Heart left ventricle (tissue), 16 donors: ENCODE measurements at regions of chr2 and their contacts with region 1.

Region 1: DNA sequence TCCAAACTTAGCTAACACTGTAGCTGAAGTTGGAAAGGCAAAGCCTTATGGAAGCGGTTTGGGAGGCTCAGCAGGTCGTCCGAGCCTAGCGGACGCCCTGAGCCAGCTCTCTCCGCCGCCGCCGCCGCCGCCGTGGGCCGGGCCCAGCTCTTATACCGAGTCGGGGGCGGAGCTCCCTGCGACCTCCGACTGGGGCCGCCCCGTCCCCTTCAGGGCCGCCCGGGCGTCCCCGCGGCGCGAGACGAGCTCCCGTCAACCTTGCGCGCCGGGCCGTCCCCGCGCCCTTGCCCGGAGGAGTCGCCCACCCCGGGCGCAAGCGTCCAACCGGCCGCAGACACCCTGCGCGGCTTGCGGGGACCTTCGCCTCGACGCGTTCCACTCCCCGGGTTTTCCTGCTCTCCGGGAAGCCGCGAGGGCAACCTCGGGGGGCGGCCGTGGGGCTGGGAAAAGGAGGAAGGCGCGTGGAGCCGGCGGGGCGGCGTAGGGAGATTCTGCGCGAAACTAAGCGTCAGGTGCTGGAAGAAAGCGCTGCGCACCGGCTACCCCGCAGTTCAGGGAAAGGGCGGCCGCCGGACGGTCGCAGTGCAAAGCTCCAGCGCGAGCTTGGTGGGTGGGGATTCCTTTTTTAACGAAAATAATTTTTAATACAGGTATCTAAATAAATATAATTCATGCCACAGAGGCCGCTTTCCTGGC is at the start of gene SLC40A1:
- DNase-seq: peak; percentile 88 to 94 (median 89)
- ATAC-seq: peak; percentile 96 to 99 (median 98)
- H3K4me3 ChIP-seq: peak within 1 kb of the TSS; percentile 22 to 89 (median 75)
- H3K27ac ChIP-seq: peak within 1 kb of the TSS; percentile 90 to 99 (median 96)
- H3K4me1 ChIP-seq: peaks cover 0 to 68% (median 40%) of the 10 kb centered on the region in 12 donors
- H3K27me3 ChIP-seq: no peaks in the 10 kb centered on the region
- CTCF ChIP-seq: peak in 1 of 12 donors; percentile 17
- POLR2A ChIP-seq: peak in 1 of 2 donors; percentile 93
- total RNA-seq, gene SLC40A1: 21.9 to 109 (median 42.9) TPM

Region 2: DNA sequence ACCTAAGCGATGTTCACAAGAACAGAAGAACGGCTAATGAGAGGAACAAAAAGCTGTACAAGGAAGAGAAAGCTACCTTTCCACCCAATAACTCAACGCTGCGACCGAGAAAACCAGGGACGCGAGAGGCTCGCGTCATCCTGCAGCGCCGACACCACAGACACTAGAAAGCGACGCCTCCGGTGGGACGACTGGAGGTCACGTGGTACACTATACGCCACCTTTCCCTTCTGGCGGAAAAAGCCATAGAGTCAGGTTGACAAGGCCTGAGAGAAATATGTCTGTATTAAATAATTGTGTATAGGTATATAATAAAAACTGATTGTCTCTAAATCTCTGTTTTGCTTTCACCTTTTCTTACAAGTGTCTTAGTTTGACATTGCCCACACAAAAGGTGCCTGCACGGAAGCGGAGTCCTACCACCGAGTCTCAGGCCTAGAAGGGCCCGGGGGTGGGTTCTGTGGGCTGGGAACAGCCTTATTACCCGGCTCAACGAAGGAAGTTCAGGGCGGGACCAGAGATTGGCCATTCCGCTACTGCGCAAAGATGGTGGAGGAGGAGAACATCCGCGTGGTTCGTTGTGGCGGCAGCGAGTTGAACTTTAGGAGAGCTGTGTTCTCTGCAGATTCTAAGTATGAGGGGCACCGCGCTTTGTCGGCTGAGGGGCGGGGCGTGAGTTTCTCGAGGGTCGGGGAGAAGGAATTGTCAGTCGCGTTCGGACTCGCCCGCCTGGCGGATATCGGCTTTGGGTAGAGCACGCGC is 139.7 kb before region 1 on chr2 and contains the start of gene WDR75:
- intact Hi-C with region 1: loop called in 1 of 10 experiments (anchors 5 kb)
- DNase-seq: peak; percentile 93 to 95 (median 95)
- ATAC-seq: peak; percentile 99
- H3K4me3 ChIP-seq: peak within 1 kb of the TSS; percentile 50 to 91 (median 81)
- H3K27ac ChIP-seq: peak within 1 kb of the TSS; percentile 80 to 97 (median 90)
- H3K4me1 ChIP-seq: peaks cover 0 to 45% (median 14%) of the 10 kb centered on the region in 12 donors
- H3K27me3 ChIP-seq: no peaks in the 10 kb centered on the region
- CTCF ChIP-seq: peak in 2 of 12 donors; percentile 6 to 14
- POLR2A ChIP-seq: peak in 1 of 2 donors; percentile 48
- total RNA-seq, gene WDR75: 11.2 to 22.0 (median 14.9) TPM

Region 3: GRCh38 chr2:189477756-189478155 is 103.0 kb before region 1 on chr2:
- intact Hi-C with region 1: loop called in 2 of 10 experiments (anchors 5 to 10 kb)
- DNase-seq: no peak
- ATAC-seq: no peak
- H3K4me3 ChIP-seq: no peak overlapping the region
- H3K27ac ChIP-seq: no peak overlapping the region
- H3K4me1 ChIP-seq: no peaks in the 10 kb centered on the region
- H3K27me3 ChIP-seq: no peaks in the 10 kb centered on the region
- CTCF ChIP-seq: no peak
- POLR2A ChIP-seq: no peak

Region 4: DNA sequence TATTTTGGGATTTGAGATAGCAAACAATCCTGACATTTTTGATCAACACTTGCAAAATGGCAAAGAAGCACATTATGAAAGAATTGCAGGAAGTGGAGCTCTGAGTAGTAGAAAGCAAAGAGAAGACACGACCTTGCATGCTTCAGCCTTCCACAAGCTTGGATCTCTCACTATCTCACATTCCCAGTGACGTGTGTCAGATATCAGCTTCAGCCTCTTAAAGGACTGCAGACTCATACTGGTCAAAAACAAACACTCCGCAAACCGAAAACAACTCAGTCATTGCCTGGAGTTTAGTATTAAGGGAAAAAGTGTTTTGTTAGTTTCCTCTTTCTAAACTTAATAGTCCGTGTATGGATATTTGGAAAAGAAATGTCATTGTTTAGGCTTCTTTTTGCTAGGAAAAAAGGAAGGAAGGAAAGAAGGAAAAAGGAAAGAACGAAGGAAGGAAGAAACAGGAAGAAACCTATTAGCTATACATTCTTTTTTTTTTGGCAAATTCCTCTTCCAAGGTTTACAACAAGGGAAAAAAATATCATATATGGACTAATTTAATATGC is 32.4 kb after region 1 on chr2:
- intact Hi-C with region 1: loop called in 2 of 10 experiments (anchors 2 kb)
- DNase-seq: peak in 4 of 5 donors; percentile 32 to 55 (median 41)
- ATAC-seq: peak; percentile 96 to 98 (median 97)
- H3K4me3 ChIP-seq: peak overlapping the region in 10 of 12 donors; percentile 9 to 39 (median 27)
- H3K27ac ChIP-seq: peak overlapping the region; percentile 50 to 86 (median 77)
- H3K4me1 ChIP-seq: peaks cover 0 to 29% (median 17%) of the 10 kb centered on the region in 12 donors
- H3K27me3 ChIP-seq: no peaks in the 10 kb centered on the region
- CTCF ChIP-seq: no peak
- POLR2A ChIP-seq: no peak

Region 5: GRCh38 chr2:189633392-189633811 is 52.6 kb after region 1 on chr2:
- intact Hi-C with region 1: loop called in 4 of 10 experiments (anchors 5 kb)
- DNase-seq: no peak
- ATAC-seq: peak in 1 of 4 donors; percentile 41
- H3K4me3 ChIP-seq: no peak overlapping the region
- H3K27ac ChIP-seq: no peak overlapping the region
- H3K4me1 ChIP-seq: peaks cover 0 to 11% (median 0%) of the 10 kb centered on the region in 12 donors
- H3K27me3 ChIP-seq: no peaks in the 10 kb centered on the region
- CTCF ChIP-seq: peak; percentile 23 to 60 (median 50)
- POLR2A ChIP-seq: no peak

Region 6: GRCh38 chr2:189662669-189663226 is 81.9 kb after region 1 on chr2:
- intact Hi-C with region 1: no loop called
- DNase-seq: no peak
- ATAC-seq: no peak
- H3K4me3 ChIP-seq: peak overlapping the region in 11 of 12 donors; percentile 59 to 94 (median 81)
- H3K27ac ChIP-seq: no peak overlapping the region
- H3K4me1 ChIP-seq: peaks cover 0 to 50% (median 22%) of the 10 kb centered on the region in 12 donors
- H3K27me3 ChIP-seq: no peaks in the 10 kb centered on the region
- CTCF ChIP-seq: no peak
- POLR2A ChIP-seq: no peak

Region 7: DNA sequence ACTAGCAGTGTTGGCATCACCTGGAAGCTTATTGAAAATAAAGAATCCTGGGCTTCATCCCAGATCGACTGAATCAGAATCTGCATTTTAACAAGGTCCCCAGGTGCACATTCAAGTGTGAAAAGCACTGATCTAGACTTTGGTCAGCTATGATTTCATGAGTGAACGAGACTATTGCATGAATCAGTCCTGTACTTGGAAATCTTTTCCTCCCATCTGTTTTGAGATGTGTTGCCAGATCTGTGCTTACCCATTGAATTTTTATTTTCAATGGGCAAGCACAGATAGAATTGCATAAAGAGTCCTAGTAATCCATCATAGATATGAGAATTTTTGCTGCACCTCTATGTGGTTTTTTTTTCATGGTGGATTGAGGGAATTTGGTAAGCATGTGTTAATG is 267.5 kb after region 1 on chr2:
- intact Hi-C with region 1: no loop called
- DNase-seq: no peak
- ATAC-seq: peak in 1 of 4 donors; percentile 65
- H3K4me3 ChIP-seq: no peak overlapping the region
- H3K27ac ChIP-seq: no peak overlapping the region
- H3K4me1 ChIP-seq: peaks cover 0 to 5% (median 0%) of the 10 kb centered on the region in 12 donors
- H3K27me3 ChIP-seq: no peaks in the 10 kb centered on the region
- CTCF ChIP-seq: no peak
- POLR2A ChIP-seq: no peak